Endothelial cell of umbilical vein (primary cell): ENCODE measurements at regions of chr13 and their contacts with region 1.

Region 1: GRCh38 chr13:102460801-102461200 is 59.0 kb upstream of the FGF14 start:
- DNase-seq: no peak
- H3K4me3 ChIP-seq: no peak overlapping the region
- H3K27ac ChIP-seq: no peak overlapping the region
- H3K4me1 ChIP-seq: no peaks in the 10 kb centered on the region
- H3K27me3 ChIP-seq: no peaks in the 10 kb centered on the region
- CTCF ChIP-seq: no peak
- POLR2A ChIP-seq: no peak

Region 2: GRCh38 chr13:101942038-101942437 is 518.8 kb before region 1 on chr13:
- CTCF ChIA-PET with region 1: interaction called, 4 read pairs
- POLR2A ChIA-PET with region 1: no interaction called
- dilution Hi-C with region 1: no loop called
- intact Hi-C with region 1: loop called (anchors 1 kb)
- DNase-seq: peak; percentile 28
- H3K4me3 ChIP-seq: no peak overlapping the region
- H3K27ac ChIP-seq: no peak overlapping the region
- H3K4me1 ChIP-seq: no peaks in the 10 kb centered on the region
- H3K27me3 ChIP-seq: no peaks in the 10 kb centered on the region
- CTCF ChIP-seq: peak; percentile 37 to 38
- POLR2A ChIP-seq: no peak

Region 3: DNA sequence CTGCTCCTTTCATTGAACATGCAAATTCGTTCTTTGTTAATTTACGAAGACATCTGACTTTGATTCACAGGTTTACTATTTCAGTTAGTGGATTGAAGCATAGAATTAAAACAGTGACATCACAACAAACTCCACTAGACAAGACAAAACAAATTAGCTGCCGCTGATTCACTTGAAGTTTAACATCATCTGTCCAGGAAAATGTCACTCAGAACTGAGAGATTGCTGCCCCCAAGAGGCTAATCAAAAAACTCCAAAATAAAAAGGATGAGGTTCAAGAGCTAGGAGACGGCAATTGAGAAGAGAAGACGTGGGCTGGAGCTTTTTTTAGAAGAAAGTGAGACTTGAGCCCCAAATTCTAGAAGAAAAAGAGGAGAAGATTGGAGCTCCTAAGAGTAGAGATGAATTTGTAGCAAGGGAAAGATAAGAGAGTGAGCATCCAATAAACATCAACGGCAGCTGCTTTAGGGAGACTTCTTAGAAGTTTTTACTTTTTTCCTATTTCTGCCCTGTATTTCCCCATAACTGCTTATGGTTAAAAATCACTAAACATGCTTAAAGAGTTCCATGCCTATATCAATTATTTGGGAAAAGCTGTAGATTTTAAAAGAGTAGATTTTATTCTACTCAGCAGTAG is 95.2 kb after region 1 on chr13:
- CTCF ChIA-PET with region 1: no interaction called
- POLR2A ChIA-PET with region 1: no interaction called
- dilution Hi-C with region 1: no loop called
- intact Hi-C with region 1: no loop called
- DNase-seq: peak; percentile 52
- H3K4me3 ChIP-seq: no peak overlapping the region
- H3K27ac ChIP-seq: no peak overlapping the region
- H3K4me1 ChIP-seq: no peaks in the 10 kb centered on the region
- H3K27me3 ChIP-seq: peaks cover 2 to 3% of the 10 kb centered on the region in 2 experiments
- CTCF ChIP-seq: peak; percentile 28 to 47
- POLR2A ChIP-seq: no peak